Caco-2 (cell line): ENCODE measurements at regions of chr6 and their contacts with region 1.

Region 1: DNA sequence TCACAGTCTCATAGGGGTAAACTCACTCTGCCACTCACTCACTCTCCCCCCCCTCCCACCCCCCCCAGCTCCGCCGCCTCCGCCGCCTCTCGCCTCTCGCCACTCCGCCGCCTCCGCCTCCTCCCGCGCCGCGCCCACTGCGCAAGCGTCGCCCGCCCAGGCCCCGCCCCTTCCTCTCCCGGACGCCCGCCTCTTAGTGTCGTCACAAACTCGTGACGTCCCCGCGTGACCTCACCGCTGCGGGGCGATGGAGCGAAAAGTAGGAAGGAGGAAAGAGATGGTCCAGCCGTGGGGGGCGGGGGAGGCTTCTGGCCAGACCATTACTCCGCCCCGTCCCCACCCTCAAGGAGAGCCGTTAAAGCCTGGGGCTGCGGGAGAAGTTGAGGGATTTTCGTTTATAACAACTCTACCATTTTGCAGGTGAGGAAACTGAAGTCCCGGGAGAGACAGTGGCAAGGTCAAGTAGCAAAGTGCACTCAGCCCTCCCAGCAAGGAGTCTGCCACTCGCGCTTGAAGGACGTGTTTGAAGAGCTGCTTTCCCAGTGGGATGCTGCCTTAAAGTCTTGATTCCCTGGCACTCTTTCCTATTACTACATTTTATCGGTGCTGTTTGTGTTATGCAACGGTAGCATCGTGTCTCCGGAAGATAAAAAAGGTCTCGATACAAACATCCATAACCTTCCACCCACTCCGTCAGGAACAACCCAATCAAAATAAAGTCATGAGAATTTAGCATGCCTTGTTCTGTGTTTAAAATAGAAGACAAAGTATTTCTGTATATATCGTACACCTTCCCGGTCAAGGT is at the start of gene ILRUN:
- DNase-seq: peak; percentile 96 to 97
- H3K4me3 ChIP-seq: peak within 1 kb of the TSS; percentile 74
- H3K4me3 Mint-ChIP-seq: peak within 1 kb of the TSS; percentile 78
- H3K27ac Mint-ChIP-seq: peak within 1 kb of the TSS; percentile 77
- H3K4me1 ChIP-seq: peaks cover 11% of the 10 kb centered on the region
- H3K4me1 Mint-ChIP-seq: peaks cover 29% of the 10 kb centered on the region
- H3K27me3 ChIP-seq: no peaks in the 10 kb centered on the region
- H3K27me3 Mint-ChIP-seq: no peaks in the 10 kb centered on the region
- CTCF ChIP-seq: no peak
- total RNA-seq, gene ILRUN: 92.1 and 95.9 TPM in 2 replicates

Region 2: GRCh38 chr6:34745277-34746103 is 48.5 kb after region 1 on chr6:
- CTCF ChIA-PET with region 1: interaction called, 10 read pairs
- POLR2A ChIA-PET with region 1: interaction called, 6 read pairs
- intact Hi-C with region 1: loop called (anchors 2 kb)
- DNase-seq: peak; percentile 81 to 83
- H3K4me3 ChIP-seq: no peak overlapping the region
- H3K4me3 Mint-ChIP-seq: peak overlapping the region; percentile 44
- H3K27ac Mint-ChIP-seq: peak overlapping the region; percentile 88
- H3K4me1 ChIP-seq: peaks cover 32% of the 10 kb centered on the region
- H3K4me1 Mint-ChIP-seq: peaks cover 24% of the 10 kb centered on the region
- H3K27me3 ChIP-seq: no peaks in the 10 kb centered on the region
- H3K27me3 Mint-ChIP-seq: no peaks in the 10 kb centered on the region
- CTCF ChIP-seq: no peak